Activated naive CD4-positive, alpha-beta T cell treated with anti-CD3 and anti-CD28 coated beads for 36 hours (primary cell): ENCODE measurements at regions of chr12 and their contacts with region 1.

Region 1: GRCh38 chr12:52278541-52279421 is 4.3 kb downstream of the KRT86 start:
- DNase-seq: peak; percentile 78
- H3K4me3 Mint-ChIP-seq: no peak overlapping the region
- H3K27ac Mint-ChIP-seq: no peak overlapping the region
- H3K4me1 Mint-ChIP-seq: peaks cover 3% of the 10 kb centered on the region
- H3K27me3 Mint-ChIP-seq: peaks cover 12% of the 10 kb centered on the region

Region 2: GRCh38 chr12:52156736-52157565 is 121.8 kb before region 1 on chr12:
- CTCF ChIA-PET with region 1: interaction called, 21 read pairs
- intact Hi-C with region 1: loop called (anchors 2 kb)
- DNase-seq: peak; percentile 83
- H3K4me3 Mint-ChIP-seq: no peak overlapping the region
- H3K27ac Mint-ChIP-seq: no peak overlapping the region
- H3K4me1 Mint-ChIP-seq: peaks cover 26% of the 10 kb centered on the region
- H3K27me3 Mint-ChIP-seq: no peaks in the 10 kb centered on the region

Region 3: GRCh38 chr12:52221912-52222457 is 56.8 kb before region 1 on chr12:
- CTCF ChIA-PET with region 1: interaction called, 20 read pairs
- intact Hi-C with region 1: loop called (anchors 2 kb)
- DNase-seq: peak; percentile 96
- H3K4me3 Mint-ChIP-seq: no peak overlapping the region
- H3K27ac Mint-ChIP-seq: peak overlapping the region; percentile 14
- H3K4me1 Mint-ChIP-seq: peaks cover 22% of the 10 kb centered on the region
- H3K27me3 Mint-ChIP-seq: peaks cover 25% of the 10 kb centered on the region

Region 4: DNA sequence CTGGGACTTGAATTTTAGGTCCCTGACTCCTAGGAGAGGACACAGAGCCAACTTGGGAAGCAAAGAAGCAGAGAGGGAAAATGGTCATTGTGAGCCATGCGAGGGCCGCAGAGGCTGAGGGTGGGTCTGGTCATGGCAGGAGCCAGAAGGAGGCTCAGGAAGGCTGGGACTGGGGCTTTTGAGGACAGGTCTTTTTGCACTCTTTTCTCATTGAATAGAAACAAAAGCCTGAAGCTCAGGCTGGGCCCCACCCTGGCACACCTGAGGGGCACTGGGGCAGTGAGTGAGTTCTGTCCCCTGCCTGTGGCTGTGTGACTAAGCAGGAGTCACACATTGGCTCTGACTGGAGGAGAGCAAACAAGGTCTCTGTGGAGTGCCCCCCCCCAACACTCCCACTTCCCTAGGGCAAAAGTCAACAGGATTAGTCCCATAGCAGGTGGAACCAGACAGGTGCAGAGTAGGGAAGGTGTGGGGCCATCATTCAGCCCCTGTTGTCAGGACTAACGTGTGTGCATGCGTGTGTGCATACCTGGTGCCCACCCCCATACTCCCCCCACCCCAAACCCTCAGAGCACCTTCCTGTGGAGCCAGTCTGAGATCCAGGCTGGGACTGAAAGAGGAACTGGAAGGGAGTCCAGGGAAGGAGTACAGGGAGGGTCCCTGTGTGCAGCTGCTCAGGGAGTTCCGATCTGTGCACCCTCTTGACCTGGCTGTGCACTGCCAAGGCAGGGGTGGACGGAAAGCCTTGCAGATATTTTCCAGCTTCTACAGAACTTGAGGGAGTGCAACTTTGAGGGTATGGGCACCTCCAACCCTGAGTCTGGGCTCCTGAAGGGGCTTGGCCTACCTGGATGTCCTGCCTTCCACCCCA is 42.7 kb before region 1 on chr12:
- CTCF ChIA-PET with region 1: interaction called, 10 read pairs
- intact Hi-C with region 1: no loop called
- DNase-seq: no peak
- H3K4me3 Mint-ChIP-seq: no peak overlapping the region
- H3K27ac Mint-ChIP-seq: no peak overlapping the region
- H3K4me1 Mint-ChIP-seq: no peaks in the 10 kb centered on the region
- H3K27me3 Mint-ChIP-seq: peaks cover 30% of the 10 kb centered on the region

Region 5: GRCh38 chr12:52268212-52268611 is 10.6 kb before region 1 on chr12:
- CTCF ChIA-PET with region 1: interaction called, 13 read pairs
- intact Hi-C with region 1: no loop called
- DNase-seq: no peak
- H3K4me3 Mint-ChIP-seq: no peak overlapping the region
- H3K27ac Mint-ChIP-seq: no peak overlapping the region
- H3K4me1 Mint-ChIP-seq: no peaks in the 10 kb centered on the region
- H3K27me3 Mint-ChIP-seq: peaks cover 11% of the 10 kb centered on the region

Region 6: DNA sequence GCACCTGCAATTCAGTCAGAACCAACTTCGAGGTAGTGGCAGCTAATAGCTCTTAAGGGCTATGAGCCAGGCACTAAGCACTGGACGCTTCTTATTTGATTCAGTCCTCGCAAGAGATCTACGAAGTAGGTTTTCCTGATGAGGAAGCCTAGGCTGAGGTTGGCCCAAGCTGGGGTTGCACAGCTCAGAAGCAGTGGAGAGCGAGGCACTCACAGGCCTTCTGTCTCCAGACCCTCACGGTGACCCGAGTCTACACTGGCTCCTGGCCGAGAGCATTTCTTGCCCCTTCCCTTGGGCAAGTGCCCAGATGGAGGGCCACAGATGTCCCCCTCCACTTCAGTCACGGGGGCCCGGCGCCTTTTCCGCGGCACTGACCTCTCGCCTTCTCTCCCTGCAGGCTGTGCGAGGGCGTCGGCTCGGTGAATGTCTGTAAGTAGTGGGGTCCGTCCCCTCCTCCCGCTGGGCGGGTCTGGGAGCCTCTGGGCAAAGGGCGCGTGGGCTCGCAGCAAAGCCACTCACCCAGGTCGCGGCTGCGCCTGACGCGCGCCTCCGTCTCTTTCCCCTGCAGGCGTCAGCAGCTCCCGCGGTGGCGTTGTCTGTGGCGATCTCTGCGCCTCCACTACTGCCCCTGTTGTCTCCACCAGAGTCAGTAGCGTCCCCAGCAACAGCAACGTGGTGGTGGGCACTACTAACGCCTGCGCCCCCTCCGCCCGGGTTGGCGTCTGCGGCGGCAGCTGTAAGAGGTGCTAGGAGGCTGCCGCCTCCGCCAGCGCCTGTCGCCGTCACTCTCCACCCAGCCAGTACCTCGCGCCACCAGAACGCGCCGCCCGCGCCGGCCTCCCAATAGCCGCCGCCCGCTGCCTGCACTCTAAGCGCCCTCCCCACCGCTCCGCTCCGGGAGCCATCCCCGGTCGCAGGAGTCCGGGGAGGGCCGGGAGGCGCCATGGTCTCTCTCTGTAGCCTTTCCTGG is 29.3 kb after region 1 on chr12:
- CTCF ChIA-PET with region 1: interaction called, 19 read pairs
- intact Hi-C with region 1: no loop called
- DNase-seq: peak; percentile 59
- H3K4me3 Mint-ChIP-seq: peak overlapping the region; percentile 44
- H3K27ac Mint-ChIP-seq: no peak overlapping the region
- H3K4me1 Mint-ChIP-seq: peaks cover 14% of the 10 kb centered on the region
- H3K27me3 Mint-ChIP-seq: peaks cover 37% of the 10 kb centered on the region

Region 7: GRCh38 chr12:52327052-52327829 is 48.5 kb after region 1 on chr12:
- CTCF ChIA-PET with region 1: interaction called, 29 read pairs
- intact Hi-C with region 1: no loop called
- DNase-seq: peak; percentile 90
- H3K4me3 Mint-ChIP-seq: no peak overlapping the region
- H3K27ac Mint-ChIP-seq: no peak overlapping the region
- H3K4me1 Mint-ChIP-seq: peaks cover 13% of the 10 kb centered on the region
- H3K27me3 Mint-ChIP-seq: peaks cover 5% of the 10 kb centered on the region